ENCODE measurements at regions of chr12 and their contacts with region 1.

Region 1: DNA sequence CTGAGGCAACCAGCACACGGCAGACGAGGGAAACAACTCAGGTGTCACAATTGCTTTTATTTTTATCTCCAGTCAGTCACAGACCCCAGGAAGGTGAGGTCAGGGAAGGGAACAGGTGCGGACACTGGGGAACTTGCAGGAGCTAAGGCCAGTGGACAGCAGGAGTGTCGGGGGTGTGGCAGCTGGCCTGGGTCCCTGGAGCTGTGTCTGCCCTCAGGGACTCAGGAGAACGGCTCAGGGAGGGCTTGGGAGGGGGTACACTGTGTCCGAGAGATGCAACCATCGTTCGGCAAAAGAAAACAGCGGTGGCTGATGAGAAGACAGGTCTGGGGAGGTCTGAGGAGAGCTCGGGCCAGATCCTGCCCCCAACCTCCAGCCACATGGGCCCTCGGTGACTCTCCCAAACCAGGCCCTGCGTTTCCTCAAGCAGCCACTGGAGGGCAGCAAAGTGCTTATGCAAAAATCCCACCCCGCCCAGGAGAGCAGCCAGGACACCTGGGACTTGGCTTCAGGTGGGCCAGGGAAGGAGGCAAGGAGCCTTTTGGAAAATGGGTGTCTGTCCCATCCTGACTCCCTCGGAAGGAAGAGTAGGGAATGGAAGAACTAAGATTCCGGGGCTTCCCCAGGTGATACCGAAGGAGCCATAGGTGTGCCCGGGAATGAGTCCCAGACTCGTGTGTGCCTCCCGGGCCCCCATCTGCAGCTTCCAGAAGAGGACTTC is 24.1 kb upstream of the BCDIN3D start:
- DNase-seq: peak; percentile 65 to 86 (median 85)
- H3K4me3 ChIP-seq: no peak overlapping the region
- H3K27ac ChIP-seq: no peak overlapping the region
- H3K4me1 ChIP-seq: peaks cover 21% of the 10 kb centered on the region
- H3K27me3 ChIP-seq: no peaks in the 10 kb centered on the region
- CTCF ChIP-seq: peak; percentile 87 to 90 (median 88)
- EP300 ChIP-seq: no peak
- POLR2A ChIP-seq: no peak

Region 2: GRCh38 chr12:49945394-49946080 is 78.5 kb after region 1 on chr12:
- intact Hi-C with region 1: loop called in 1 of 4 experiments (anchors 5 kb)
- DNase-seq: peak; percentile 75 to 86 (median 85)
- H3K4me3 ChIP-seq: no peak overlapping the region
- H3K27ac ChIP-seq: no peak overlapping the region
- H3K4me1 ChIP-seq: peaks cover 3% of the 10 kb centered on the region
- H3K27me3 ChIP-seq: no peaks in the 10 kb centered on the region
- CTCF ChIP-seq: peak; percentile 67 to 85 (median 69)
- EP300 ChIP-seq: no peak
- POLR2A ChIP-seq: no peak

Region 3: DNA sequence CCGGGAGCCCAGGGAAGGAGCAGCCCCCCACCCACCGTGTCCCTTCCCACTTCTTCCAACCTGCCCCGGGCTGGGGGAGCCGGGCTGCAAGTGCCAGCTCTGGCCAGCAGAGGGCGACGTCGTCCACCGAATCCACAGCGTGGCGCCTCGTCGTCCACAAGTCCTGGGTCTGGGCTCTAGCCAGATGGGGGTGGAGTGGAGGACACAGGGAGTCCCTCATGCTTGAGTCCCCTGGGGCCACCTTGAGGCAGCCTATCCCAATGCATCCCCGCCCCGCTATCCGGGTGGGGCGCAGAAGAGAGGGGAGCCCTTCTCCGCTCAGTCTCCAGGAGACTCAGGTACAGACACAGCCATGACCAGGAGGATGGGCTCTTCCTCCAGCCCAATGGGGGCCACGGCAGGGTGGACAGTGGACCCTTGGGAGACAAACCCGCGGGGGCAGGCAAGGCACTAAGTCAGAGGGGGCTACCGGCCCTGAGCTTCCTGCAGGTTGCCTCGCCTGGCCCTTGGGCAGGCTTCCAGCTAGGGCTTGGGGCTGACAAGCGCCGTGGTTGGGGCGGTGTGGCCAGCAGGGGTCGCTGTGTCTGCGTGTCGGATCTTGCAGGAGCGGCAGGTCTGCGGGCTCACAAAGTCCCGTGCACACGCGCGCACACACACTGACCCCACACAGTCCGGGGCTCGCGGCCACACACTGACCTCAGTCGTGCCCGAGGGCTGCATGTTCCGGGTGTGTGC is 100.2 kb after region 1 on chr12:
- intact Hi-C with region 1: loop called in 2 of 4 experiments (anchors 5 to 10 kb)
- DNase-seq: peak; percentile 80 to 93 (median 88)
- H3K4me3 ChIP-seq: peak overlapping the region; percentile 4
- H3K27ac ChIP-seq: no peak overlapping the region
- H3K4me1 ChIP-seq: peaks cover 10% of the 10 kb centered on the region
- H3K27me3 ChIP-seq: no peaks in the 10 kb centered on the region
- CTCF ChIP-seq: peak; percentile 68 to 88 (median 84)
- EP300 ChIP-seq: no peak
- POLR2A ChIP-seq: no peak

Region 4: GRCh38 chr12:50055831-50056638 is 189.0 kb after region 1 on chr12:
- intact Hi-C with region 1: loop called in 2 of 4 experiments (anchors 10 kb)
- DNase-seq: peak in 4 of 5 donors; percentile 48 to 59 (median 54)
- H3K4me3 ChIP-seq: no peak overlapping the region
- H3K27ac ChIP-seq: no peak overlapping the region
- H3K4me1 ChIP-seq: peaks cover 8% of the 10 kb centered on the region
- H3K27me3 ChIP-seq: no peaks in the 10 kb centered on the region
- CTCF ChIP-seq: peak; percentile 62 to 87 (median 77)
- EP300 ChIP-seq: no peak
- POLR2A ChIP-seq: no peak

Region 5: DNA sequence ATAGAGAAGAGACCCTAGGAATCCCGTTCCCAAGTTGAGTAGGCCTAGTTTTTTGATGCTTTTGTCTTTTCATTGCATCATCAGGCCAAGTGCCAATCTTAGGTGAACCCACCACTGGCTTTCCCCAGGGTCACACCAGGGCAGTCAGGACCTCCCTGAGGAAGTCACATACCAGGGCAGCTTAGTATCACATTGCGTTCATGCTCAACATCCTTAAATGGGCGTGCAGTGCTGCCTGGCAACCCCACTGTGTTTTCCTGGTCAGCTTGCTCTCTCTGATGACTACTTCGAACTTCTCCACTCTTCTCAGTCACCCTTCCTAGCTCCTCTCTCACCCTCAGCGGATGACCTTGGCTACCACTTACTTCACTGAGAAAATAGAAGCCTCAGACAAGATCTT is 199.4 kb after region 1 on chr12:
- intact Hi-C with region 1: loop called in 3 of 4 experiments (anchors 1 to 10 kb)
- DNase-seq: no peak
- H3K4me3 ChIP-seq: no peak overlapping the region
- H3K27ac ChIP-seq: no peak overlapping the region
- H3K4me1 ChIP-seq: peaks cover 1% of the 10 kb centered on the region
- H3K27me3 ChIP-seq: no peaks in the 10 kb centered on the region
- CTCF ChIP-seq: no peak
- EP300 ChIP-seq: no peak
- POLR2A ChIP-seq: no peak

Region 6: DNA sequence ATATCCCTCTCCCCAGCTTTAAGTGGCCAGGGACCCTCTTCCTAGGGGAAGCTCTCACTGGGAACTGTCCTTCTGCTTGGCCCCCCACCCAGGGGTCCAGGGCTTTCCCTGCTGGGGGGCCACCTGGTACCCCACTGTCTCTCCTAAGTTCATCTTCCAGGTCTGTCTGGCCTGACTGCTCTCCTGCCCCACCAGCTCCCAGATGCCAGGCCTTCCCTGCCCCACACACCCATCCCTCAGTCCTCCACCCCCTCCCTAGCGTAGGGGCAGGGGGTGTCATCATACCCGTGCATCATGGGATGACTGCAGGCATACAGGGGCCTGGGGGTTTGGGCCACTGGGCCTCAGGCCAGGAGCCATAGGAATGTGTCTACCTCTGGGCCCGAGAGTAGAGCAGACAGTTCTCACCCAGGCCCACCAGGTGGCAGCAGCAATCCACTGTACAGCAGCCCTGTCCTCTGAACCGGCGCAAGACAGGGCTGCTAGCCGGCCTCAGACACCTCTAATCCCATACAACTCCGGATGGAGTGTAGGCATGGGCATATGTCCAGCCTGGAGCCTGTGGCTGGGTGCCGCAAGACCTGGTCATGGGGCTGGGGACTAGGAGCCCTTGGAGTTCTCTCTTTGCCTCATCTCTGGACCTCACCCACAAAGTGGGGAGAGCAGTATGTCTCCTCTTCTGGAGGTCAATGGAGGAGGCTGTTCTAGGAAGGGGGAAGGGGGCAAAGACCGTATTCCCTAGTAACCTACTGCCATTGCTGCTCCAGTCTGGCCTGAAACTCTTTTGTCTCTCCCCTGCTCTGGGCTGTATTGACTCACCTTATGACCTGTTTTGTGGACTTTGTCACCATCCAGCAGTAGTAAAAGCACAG is 208.2 kb after region 1 on chr12:
- intact Hi-C with region 1: loop called in 2 of 4 experiments (anchors 1 to 10 kb)
- DNase-seq: peak; percentile 78 to 90 (median 88)
- H3K4me3 ChIP-seq: no peak overlapping the region
- H3K27ac ChIP-seq: no peak overlapping the region
- H3K4me1 ChIP-seq: no peaks in the 10 kb centered on the region
- H3K27me3 ChIP-seq: no peaks in the 10 kb centered on the region
- CTCF ChIP-seq: peak; percentile 87 to 96 (median 92)
- EP300 ChIP-seq: no peak
- POLR2A ChIP-seq: no peak